ENCODE measurements at regions of chr1 and their contacts with region 1.

Region 1: DNA sequence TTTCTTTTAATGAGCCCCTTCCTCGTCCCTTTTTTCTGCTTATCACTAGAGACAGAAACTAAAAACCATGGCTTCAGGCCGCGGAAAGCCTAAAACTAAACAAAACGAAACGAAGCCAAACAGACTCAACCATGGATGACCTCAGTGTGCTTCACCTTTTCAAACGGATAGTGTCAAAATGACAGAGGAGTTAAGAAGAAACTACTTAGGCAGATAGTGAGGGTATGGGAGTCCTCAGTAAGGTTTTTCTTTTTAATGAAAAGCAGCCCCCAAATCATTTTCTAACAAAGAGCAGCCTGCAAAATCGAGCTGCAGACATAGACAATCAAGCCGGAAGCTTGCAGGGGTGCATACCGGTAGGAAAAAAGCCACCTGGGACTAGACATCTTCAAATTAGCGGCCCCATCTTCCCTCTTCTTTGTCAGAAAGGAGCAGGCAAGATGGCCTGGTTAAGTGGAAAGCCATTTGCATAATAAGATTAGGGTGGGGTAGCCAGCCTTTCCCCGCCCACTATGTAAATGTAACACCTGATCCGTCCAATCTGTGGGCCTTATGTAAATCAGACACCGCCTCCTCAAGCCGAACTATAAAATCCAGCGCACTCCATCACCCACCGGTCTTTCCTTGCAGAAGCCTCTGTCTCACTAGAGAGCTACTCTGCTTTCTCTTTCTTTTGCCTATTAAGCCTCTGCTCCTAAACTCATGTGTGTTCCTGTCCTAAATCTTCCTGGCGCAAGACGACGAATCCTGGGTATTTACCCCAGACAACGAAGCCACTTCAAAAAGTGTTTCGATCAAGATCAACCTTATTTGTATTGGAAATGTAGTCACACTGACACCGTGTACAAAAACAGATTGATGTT is 6.2 kb upstream of the ERO1B start:
- DNase-seq: peak; percentile 56 to 96 (median 71)
- ATAC-seq: peak; percentile 98
- H3K4me3 ChIP-seq: peak overlapping the region; percentile 31
- H3K27ac ChIP-seq: 0 out of 3 replicates have a peak overlapping the region, but pooled peaks have one; percentile 11
- H3K4me1 ChIP-seq: peaks cover 0 to 19% of the 10 kb centered on the region in 2 experiments; a peak in 2 of 5 replicates
- H3K27me3 ChIP-seq: no peaks in the 10 kb centered on the region
- CTCF ChIP-seq: no peak
- EP300 ChIP-seq: no peak
- POLR2A ChIP-seq: peak; percentile 90
- RAD21 ChIP-seq: no peak

Region 2: DNA sequence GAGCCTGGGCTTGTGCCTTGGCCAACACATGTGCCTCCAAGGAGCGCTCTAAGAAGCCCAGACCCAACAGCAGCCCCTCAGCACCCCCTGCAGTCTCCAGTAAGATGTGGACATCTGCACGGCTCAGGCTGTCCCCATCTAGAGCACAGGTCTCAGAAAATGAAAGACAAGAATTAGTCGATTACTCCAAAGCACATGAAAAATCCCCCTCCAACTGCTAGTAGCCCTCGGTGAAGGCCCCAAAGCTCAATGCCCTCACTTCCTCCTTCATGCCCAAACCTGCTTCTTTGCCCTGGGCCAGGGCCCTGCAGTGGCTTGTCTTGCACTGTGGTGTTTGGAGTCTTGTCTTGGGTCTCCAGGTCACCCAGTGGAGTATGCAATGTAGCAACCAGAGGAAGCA is 15.7 kb after region 1 on chr1:
- CTCF ChIA-PET with region 1: no interaction called
- POLR2A ChIA-PET with region 1: interaction called, 27 read pairs
- in situ Hi-C with region 1: no loop called
- intact Hi-C with region 1: no loop called
- DNase-seq: peak in 2 of 4 experiments; percentile 32 to 43
- ATAC-seq: peak; percentile 90
- H3K4me3 ChIP-seq: no peak overlapping the region
- H3K27ac ChIP-seq: no peak overlapping the region
- H3K4me1 ChIP-seq: peaks cover 0 to 3% of the 10 kb centered on the region in 2 experiments; a peak in 1 of 5 replicates
- H3K27me3 ChIP-seq: no peaks in the 10 kb centered on the region
- CTCF ChIP-seq: peak; percentile 47 to 64 (median 59)
- EP300 ChIP-seq: no peak
- POLR2A ChIP-seq: no peak
- RAD21 ChIP-seq: peak; percentile 32 to 81; a peak in 3 of 4 replicates

Region 3: DNA sequence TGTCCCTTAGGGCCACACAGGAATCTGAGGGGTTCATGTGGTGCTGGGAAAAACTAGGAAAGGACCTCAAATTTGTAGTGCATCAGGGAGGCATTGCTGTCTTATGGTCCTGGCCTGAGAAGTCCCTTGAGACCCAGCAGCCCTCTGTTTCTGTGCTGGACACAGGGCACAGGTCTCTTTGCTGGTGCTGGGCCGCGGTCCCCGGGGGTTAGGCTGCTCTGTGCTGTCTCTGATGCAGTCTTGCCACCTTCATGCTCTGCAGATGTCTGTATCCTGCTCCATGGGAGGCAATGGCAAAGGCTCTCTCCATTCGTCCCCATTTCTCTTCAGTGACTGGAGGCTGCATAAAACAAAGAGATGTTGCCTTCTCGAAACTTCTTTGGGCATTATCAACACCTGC is 119.1 kb after region 1 on chr1:
- CTCF ChIA-PET with region 1: no interaction called
- POLR2A ChIA-PET with region 1: no interaction called
- in situ Hi-C with region 1: no loop called
- intact Hi-C with region 1: no loop called
- DNase-seq: no peak
- ATAC-seq: 0 out of 3 replicates have a peak, but pooled peaks have one; percentile 13
- H3K4me3 ChIP-seq: no peak overlapping the region
- H3K27ac ChIP-seq: no peak overlapping the region
- H3K4me1 ChIP-seq: peaks cover 0 to 5% of the 10 kb centered on the region in 2 experiments; a peak in 2 of 5 replicates
- H3K27me3 ChIP-seq: no peaks in the 10 kb centered on the region
- CTCF ChIP-seq: no peak
- EP300 ChIP-seq: no peak
- POLR2A ChIP-seq: no peak
- RAD21 ChIP-seq: no peak

Measured in K562 (cell line).